ENCODE measurements at regions of chr15 and their contacts with region 1.

Region 1: GRCh38 chr15:81111510-81112470 is 22.3 kb upstream of the CFAP161 start:
- DNase-seq: no peak
- ATAC-seq: no peak
- H3K4me3 ChIP-seq: no peak overlapping the region
- H3K4me3 Mint-ChIP-seq: no peak overlapping the region
- H3K27ac ChIP-seq: no peak overlapping the region
- H3K27ac Mint-ChIP-seq: no peak overlapping the region
- H3K4me1 ChIP-seq: no peaks in the 10 kb centered on the region
- H3K4me1 Mint-ChIP-seq: no peaks in the 10 kb centered on the region
- H3K27me3 ChIP-seq: peaks cover 2% of the 10 kb centered on the region
- H3K27me3 Mint-ChIP-seq: peaks cover 21 to 62% of the 10 kb centered on the region in 2 donors
- CTCF ChIP-seq: no peak

Region 2: GRCh38 chr15:81410318-81410753 is 298.5 kb after region 1 on chr15:
- intact Hi-C with region 1: loop called (anchors 10 kb)
- DNase-seq: peak in 1 of 2 donors; percentile 75
- ATAC-seq: peak in 2 of 3 donors; percentile 22 to 50
- H3K4me3 ChIP-seq: no peak overlapping the region
- H3K4me3 Mint-ChIP-seq: no peak overlapping the region
- H3K27ac ChIP-seq: no peak overlapping the region
- H3K27ac Mint-ChIP-seq: no peak overlapping the region
- H3K4me1 ChIP-seq: peaks cover 6% of the 10 kb centered on the region
- H3K4me1 Mint-ChIP-seq: peaks cover 17 to 18% of the 10 kb centered on the region in 2 donors
- H3K27me3 ChIP-seq: no peaks in the 10 kb centered on the region
- H3K27me3 Mint-ChIP-seq: peaks cover 22 to 30% of the 10 kb centered on the region in 2 donors
- CTCF ChIP-seq: peak; percentile 23